ENCODE measurements at regions of chr20 and their contacts with region 1.

Region 1: GRCh38 chr20:47348539-47349142 is 7.9 kb downstream of the ZMYND8 start:
- DNase-seq: no peak
- ATAC-seq: no peak
- H3K4me3 ChIP-seq: no peak overlapping the region
- H3K4me3 Mint-ChIP-seq: no peak overlapping the region
- H3K27ac ChIP-seq: no peak overlapping the region
- H3K27ac Mint-ChIP-seq: no peak overlapping the region
- H3K4me1 ChIP-seq: peaks cover 39 to 71% of the 10 kb centered on the region in 2 donors
- H3K4me1 Mint-ChIP-seq: peaks cover 13 to 39% (median 16%) of the 10 kb centered on the region in 7 donors
- H3K27me3 ChIP-seq: no peaks in the 10 kb centered on the region
- H3K27me3 Mint-ChIP-seq: no peaks in the 10 kb centered on the region

Region 2: GRCh38 chr20:47304287-47304686 is 44.4 kb before region 1 on chr20:
- CTCF ChIA-PET with region 1: interaction called, 3 read pairs
- POLR2A ChIA-PET with region 1: interaction called, 4 read pairs
- intact Hi-C with region 1: loop called in 1 of 2 experiments (anchors 5 kb)
- DNase-seq: no peak
- ATAC-seq: no peak
- H3K4me3 ChIP-seq: no peak overlapping the region
- H3K4me3 Mint-ChIP-seq: no peak overlapping the region
- H3K27ac ChIP-seq: peak overlapping the region; percentile 4
- H3K27ac Mint-ChIP-seq: peak overlapping the region in 5 of 9 donors; percentile 50 to 77 (median 62)
- H3K4me1 ChIP-seq: no peaks in the 10 kb centered on the region
- H3K4me1 Mint-ChIP-seq: peaks cover 5 to 42% (median 30%) of the 10 kb centered on the region in 7 donors
- H3K27me3 ChIP-seq: no peaks in the 10 kb centered on the region
- H3K27me3 Mint-ChIP-seq: no peaks in the 10 kb centered on the region

Region 3: DNA sequence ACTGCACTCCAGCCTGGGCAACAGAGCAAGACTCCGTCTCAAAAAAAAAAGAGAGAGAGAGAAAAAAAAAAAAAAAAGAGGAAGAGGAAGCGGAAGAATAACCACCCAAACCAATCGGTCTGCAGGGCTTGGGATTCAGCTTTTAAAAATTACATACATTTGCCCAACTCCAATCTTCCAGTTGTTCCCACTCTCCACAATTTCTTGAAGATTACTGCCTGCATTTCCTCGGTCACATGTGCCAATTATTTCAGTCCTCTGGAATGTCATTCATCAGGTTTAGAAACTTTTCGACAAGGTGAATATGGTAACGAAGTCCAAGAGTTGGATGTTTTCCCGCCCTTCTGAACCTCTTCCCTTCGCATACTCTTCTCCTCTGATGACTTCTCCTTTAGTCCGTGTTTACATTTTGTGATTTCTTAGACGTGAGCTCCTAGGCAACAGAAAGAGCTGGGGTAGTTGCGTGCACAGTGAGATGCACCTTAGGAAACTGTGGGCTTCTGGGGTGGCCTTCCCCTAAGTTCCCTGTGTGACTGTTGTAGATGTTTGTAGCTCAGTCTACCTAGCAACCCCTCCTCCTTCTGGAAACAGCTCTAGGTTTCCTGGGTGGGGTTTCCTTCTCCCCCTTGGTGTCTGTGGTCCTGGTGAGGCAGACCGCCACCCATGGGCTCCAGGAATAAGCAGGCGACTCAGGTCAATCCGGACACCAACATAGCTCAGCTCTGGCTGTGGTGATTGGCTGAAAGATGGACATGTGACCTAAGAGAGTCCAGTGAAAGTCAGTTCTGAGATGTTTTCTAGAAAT is 90.1 kb after region 1 on chr20:
- CTCF ChIA-PET with region 1: no interaction called
- POLR2A ChIA-PET with region 1: no interaction called
- intact Hi-C with region 1: no loop called
- DNase-seq: no peak
- ATAC-seq: peak; percentile 88
- H3K4me3 ChIP-seq: no peak overlapping the region
- H3K4me3 Mint-ChIP-seq: peak overlapping the region in 1 of 10 donors; percentile 53
- H3K27ac ChIP-seq: no peak overlapping the region
- H3K27ac Mint-ChIP-seq: peak overlapping the region in 1 of 9 donors; percentile 51
- H3K4me1 ChIP-seq: no peaks in the 10 kb centered on the region
- H3K4me1 Mint-ChIP-seq: peaks cover 4 to 14% (median 5%) of the 10 kb centered on the region in 7 donors
- H3K27me3 ChIP-seq: no peaks in the 10 kb centered on the region
- H3K27me3 Mint-ChIP-seq: no peaks in the 10 kb centered on the region

Region 4: DNA sequence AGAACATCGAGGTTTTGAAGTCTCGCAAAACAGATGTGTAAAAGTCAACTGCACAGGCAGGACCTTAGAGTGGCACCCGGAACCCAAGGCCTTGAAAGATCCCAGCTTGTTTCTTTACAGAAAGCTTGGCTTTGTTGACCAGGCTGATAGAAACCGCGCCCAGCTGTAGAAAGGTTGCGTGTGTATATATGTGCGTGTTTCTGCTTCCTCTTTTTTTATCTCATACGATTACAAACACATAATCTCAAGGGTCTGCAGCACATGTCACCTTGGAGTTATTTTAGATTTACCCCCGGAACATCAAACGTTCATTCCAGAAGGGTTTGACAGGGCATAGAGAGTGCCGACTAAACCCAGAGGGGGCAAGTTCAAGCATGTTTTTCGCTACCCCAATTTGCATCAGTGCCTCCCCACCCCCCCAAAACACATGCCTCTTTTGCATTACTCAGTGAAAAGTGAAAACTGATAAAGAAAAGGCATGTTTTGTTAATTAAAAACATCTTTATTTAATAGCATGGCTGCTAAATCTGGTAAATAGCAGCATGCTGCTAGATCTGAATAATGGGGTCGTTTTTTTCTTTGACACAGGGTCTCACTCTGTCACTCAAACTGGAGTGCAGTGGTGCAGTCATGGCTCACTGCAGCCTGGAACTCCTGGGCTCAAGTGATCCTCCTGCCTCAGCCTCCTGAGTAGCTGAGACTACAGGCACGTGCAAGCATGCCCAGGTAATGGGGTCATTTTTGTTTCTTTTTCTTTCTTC is 119.8 kb after region 1 on chr20:
- CTCF ChIA-PET with region 1: no interaction called
- POLR2A ChIA-PET with region 1: no interaction called
- intact Hi-C with region 1: no loop called
- DNase-seq: no peak
- ATAC-seq: peak; percentile 32
- H3K4me3 ChIP-seq: no peak overlapping the region
- H3K4me3 Mint-ChIP-seq: no peak overlapping the region
- H3K27ac ChIP-seq: no peak overlapping the region
- H3K27ac Mint-ChIP-seq: no peak overlapping the region
- H3K4me1 ChIP-seq: no peaks in the 10 kb centered on the region
- H3K4me1 Mint-ChIP-seq: peaks cover 0 to 28% (median 3%) of the 10 kb centered on the region in 7 donors
- H3K27me3 ChIP-seq: no peaks in the 10 kb centered on the region
- H3K27me3 Mint-ChIP-seq: no peaks in the 10 kb centered on the region